ENCODE measurements at regions of chr15 and their contacts with region 1.

Region 1: GRCh38 chr15:92617549-92618520 is 37.7 kb downstream of the FAM174B start:
- DNase-seq: peak; percentile 73
- H3K4me3 ChIP-seq: no peak overlapping the region
- H3K27ac ChIP-seq: peak overlapping the region; percentile 74 to 80
- H3K4me1 ChIP-seq: peaks cover 40% of the 10 kb centered on the region
- H3K27me3 ChIP-seq: no peaks in the 10 kb centered on the region
- CTCF ChIP-seq: peak in 1 of 4 experiments; percentile 13
- POLR2A ChIP-seq: no peak

Region 2: GRCh38 chr15:92527197-92527596 is 90.6 kb before region 1 on chr15:
- intact Hi-C with region 1: loop called (anchors 5 kb)
- DNase-seq: peak; percentile 90
- H3K4me3 ChIP-seq: no peak overlapping the region
- H3K27ac ChIP-seq: peak overlapping the region; percentile 38 to 75
- H3K4me1 ChIP-seq: peaks cover 6% of the 10 kb centered on the region
- H3K27me3 ChIP-seq: no peaks in the 10 kb centered on the region
- CTCF ChIP-seq: no peak
- POLR2A ChIP-seq: no peak

Region 3: DNA sequence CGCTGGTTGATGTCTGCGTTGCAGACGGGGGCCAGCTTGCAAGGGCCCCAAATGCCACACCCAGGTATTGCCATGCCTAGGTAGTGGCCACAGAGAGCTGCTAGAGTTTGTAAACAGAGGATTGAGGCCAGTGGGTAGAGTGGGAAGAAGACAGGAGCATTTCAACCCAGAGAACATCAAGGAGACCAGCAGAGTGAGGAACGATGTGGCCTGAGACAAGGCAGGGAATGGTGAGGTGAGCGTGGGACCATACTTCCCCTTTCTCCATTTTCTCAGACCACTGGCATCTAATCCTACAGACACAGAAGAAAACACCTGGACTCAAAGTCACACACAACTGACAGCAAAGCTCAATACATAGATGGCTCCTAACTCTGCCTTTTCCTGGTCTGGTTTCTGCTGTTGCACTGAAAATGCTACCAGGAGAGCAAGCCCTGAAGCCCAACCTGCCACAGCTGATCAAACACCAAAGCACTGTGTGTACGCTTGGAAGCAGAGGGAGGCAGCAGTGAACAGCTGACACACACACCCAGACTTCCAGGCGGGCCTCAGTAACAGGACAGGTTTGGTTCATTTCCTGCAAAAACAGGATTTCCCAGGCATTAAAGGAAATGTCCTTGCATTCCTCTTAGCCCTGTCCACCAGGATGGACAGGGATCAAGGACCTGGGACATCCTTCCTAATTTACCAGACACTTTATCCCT is 36.2 kb after region 1 on chr15:
- intact Hi-C with region 1: loop called (anchors 5 kb)
- DNase-seq: peak; percentile 85
- H3K4me3 ChIP-seq: peak overlapping the region; percentile 51 to 67
- H3K27ac ChIP-seq: peak overlapping the region; percentile 84 to 90
- H3K4me1 ChIP-seq: peaks cover 6% of the 10 kb centered on the region
- H3K27me3 ChIP-seq: no peaks in the 10 kb centered on the region
- CTCF ChIP-seq: peak in 1 of 4 experiments; percentile 13
- POLR2A ChIP-seq: peak; percentile 14

Region 4: GRCh38 chr15:92665100-92665555 is 47.3 kb after region 1 on chr15:
- intact Hi-C with region 1: loop called (anchors 5 kb)
- DNase-seq: no peak
- H3K4me3 ChIP-seq: no peak overlapping the region
- H3K27ac ChIP-seq: peak overlapping the region in 1 of 2 donors; percentile 26
- H3K4me1 ChIP-seq: peaks cover 7% of the 10 kb centered on the region
- H3K27me3 ChIP-seq: no peaks in the 10 kb centered on the region
- CTCF ChIP-seq: no peak
- POLR2A ChIP-seq: no peak

Region 5: GRCh38 chr15:92683232-92683834 is 65.5 kb after region 1 on chr15:
- intact Hi-C with region 1: loop called (anchors 5 kb)
- DNase-seq: peak; percentile 39
- H3K4me3 ChIP-seq: no peak overlapping the region
- H3K27ac ChIP-seq: no peak overlapping the region
- H3K4me1 ChIP-seq: no peaks in the 10 kb centered on the region
- H3K27me3 ChIP-seq: no peaks in the 10 kb centered on the region
- CTCF ChIP-seq: peak in 3 of 4 experiments; percentile 50 to 73 (median 70)
- POLR2A ChIP-seq: no peak

Region 6: DNA sequence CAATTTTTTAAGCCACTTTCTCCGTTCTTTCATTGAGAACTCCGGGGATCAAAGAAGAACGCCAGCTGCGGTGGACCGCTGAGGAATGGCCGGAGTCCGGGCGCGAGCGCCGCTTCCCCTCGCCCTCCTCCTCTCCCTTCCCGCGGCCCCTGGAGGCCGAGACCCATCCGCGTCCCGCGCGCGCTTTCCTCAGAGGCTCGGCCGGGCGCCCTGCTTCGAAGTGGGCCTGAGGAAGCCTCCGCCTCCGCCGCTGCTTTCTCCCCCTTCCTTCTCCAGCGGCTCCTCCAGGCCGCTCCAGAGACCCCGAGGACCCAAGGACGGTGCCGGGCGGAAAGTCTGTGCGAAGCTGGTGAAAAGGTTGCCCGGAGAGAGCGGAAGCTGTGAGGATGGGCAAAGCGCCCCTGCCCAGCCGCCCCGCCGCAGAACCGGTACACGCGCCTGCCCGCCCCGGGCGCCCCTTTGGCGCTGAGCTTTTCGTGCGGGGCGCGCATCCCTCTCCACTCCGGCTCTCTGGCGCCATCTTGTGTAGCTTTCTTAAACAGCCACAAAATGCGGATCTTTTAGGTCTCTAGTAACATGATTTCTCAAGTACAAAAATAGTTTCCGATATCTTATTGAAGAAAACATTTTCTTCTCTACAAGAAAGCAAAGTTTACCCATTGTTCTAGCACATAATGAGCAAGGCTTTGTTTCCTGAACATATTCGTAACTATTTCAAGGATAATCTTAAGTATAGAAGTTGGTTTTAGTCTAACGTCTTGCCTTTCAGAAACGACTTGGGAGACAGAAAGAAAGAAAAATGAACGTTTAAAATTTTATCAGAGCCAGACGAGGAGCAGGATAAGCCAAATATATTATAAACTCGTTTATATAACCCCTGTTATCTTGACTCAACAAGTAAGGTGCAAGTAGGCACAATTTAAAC is 96.9 kb after region 1 on chr15:
- intact Hi-C with region 1: loop called (anchors 10 kb)
- DNase-seq: peak; percentile 74
- H3K4me3 ChIP-seq: peak overlapping the region; percentile 35 to 56
- H3K27ac ChIP-seq: peak overlapping the region; percentile 73 to 79
- H3K4me1 ChIP-seq: no peaks in the 10 kb centered on the region
- H3K27me3 ChIP-seq: no peaks in the 10 kb centered on the region
- CTCF ChIP-seq: peak; percentile 59 to 92 (median 92)
- POLR2A ChIP-seq: peak; percentile 19

Region 7: DNA sequence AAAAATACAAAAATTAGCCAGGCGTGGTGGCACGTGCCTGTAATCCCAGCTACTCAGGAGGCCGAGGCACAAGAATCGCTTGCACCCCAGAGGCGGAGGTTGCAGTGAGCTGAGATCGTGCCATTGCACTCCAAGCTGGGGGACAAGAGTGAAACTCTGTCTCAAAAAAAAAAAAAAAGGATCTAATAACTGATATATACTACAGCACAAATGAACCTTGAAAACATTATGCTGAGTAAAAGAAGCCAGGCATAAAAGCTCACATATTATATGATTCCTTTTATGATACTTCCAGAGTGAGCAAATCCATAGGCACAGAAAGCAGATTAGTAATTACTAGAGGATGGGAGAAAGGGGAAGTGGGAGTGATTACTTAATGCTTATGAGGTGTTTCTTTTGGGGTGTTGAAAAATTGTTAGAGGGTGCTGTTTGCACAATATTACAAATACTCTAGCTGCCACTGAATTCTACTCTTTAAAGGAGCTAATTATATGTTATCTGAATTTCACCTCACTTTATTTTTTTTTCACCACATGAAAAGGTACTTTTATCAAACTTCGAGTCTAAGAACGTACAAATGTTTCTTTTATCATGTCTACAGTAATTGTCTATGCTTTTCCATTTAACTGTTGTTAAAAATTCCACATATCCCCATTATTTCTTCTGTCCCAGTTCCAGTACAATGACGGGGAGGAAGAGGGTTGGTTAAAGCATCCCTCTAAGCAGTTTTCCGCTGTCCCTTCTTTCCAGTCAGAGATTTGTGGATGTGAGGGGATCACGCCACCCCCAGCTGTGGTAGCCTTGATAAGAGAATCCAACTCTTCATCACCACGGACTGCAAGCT is 115.5 kb after region 1 on chr15:
- intact Hi-C with region 1: no loop called
- DNase-seq: no peak
- H3K4me3 ChIP-seq: peak overlapping the region; percentile 34 to 35
- H3K27ac ChIP-seq: peak overlapping the region; percentile 74 to 79
- H3K4me1 ChIP-seq: no peaks in the 10 kb centered on the region
- H3K27me3 ChIP-seq: no peaks in the 10 kb centered on the region
- CTCF ChIP-seq: no peak
- POLR2A ChIP-seq: no peak

Region 8: DNA sequence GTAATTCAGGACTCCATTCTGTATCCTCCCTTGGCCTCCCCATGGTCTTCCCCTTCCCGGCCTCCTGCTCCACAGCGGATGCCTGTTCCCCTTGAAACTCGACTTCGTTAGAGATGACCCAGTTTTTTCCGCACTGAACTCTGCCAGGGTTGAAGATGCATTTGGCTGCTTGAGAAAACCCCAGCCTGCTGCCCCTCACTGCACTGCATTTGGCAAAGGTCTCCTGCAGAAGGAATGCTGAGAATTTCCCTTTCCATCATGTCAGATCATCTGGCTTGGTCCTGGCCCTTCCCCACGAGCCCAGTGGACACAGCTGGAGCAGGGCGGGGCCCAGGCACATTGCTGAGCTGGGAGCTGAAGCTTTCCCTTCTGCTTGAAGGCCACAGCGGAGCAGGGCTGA is 508.8 kb after region 1 on chr15:
- intact Hi-C with region 1: no loop called
- DNase-seq: no peak
- H3K4me3 ChIP-seq: no peak overlapping the region
- H3K27ac ChIP-seq: no peak overlapping the region
- H3K4me1 ChIP-seq: no peaks in the 10 kb centered on the region
- H3K27me3 ChIP-seq: no peaks in the 10 kb centered on the region
- CTCF ChIP-seq: no peak
- POLR2A ChIP-seq: no peak

Measured in prostate gland (tissue), 2 donors.